ENCODE measurements at regions of chr5 and their contacts with region 1.

Region 1: GRCh38 chr5:174724491-174725260 is at the start of gene MSX2:
- DNase-seq: peak; percentile 92
- H3K4me3 ChIP-seq: peak within 1 kb of the TSS; percentile 50 to 60 (median 56)
- H3K27ac ChIP-seq: peak within 1 kb of the TSS; percentile 67 to 84 (median 74)
- H3K4me1 ChIP-seq: peaks cover 0 to 38% (median 31%) of the 10 kb centered on the region in 4 donors
- H3K27me3 ChIP-seq: peaks cover 28 to 91% (median 79%) of the 10 kb centered on the region in 3 donors
- CTCF ChIP-seq: no peak
- EP300 ChIP-seq: no peak
- POLR2A ChIP-seq: peak in 1 of 2 donors; percentile 22
- total RNA-seq, gene MSX2: 0.66 to 1.8 (median 1.1) TPM in 3 of 4 donors, not detected in the other

Region 2: GRCh38 chr5:174571662-174572397 is 152.8 kb before region 1 on chr5:
- intact Hi-C with region 1: loop called (anchors 10 kb)
- DNase-seq: peak; percentile 81
- H3K4me3 ChIP-seq: no peak overlapping the region
- H3K27ac ChIP-seq: peak overlapping the region in 3 of 4 donors; percentile 48 to 51 (median 50)
- H3K4me1 ChIP-seq: peaks cover 0 to 14% (median 10%) of the 10 kb centered on the region in 4 donors
- H3K27me3 ChIP-seq: no peaks in the 10 kb centered on the region
- CTCF ChIP-seq: peak in 2 of 4 experiments; percentile 8 to 29
- EP300 ChIP-seq: no peak
- POLR2A ChIP-seq: no peak

Region 3: DNA sequence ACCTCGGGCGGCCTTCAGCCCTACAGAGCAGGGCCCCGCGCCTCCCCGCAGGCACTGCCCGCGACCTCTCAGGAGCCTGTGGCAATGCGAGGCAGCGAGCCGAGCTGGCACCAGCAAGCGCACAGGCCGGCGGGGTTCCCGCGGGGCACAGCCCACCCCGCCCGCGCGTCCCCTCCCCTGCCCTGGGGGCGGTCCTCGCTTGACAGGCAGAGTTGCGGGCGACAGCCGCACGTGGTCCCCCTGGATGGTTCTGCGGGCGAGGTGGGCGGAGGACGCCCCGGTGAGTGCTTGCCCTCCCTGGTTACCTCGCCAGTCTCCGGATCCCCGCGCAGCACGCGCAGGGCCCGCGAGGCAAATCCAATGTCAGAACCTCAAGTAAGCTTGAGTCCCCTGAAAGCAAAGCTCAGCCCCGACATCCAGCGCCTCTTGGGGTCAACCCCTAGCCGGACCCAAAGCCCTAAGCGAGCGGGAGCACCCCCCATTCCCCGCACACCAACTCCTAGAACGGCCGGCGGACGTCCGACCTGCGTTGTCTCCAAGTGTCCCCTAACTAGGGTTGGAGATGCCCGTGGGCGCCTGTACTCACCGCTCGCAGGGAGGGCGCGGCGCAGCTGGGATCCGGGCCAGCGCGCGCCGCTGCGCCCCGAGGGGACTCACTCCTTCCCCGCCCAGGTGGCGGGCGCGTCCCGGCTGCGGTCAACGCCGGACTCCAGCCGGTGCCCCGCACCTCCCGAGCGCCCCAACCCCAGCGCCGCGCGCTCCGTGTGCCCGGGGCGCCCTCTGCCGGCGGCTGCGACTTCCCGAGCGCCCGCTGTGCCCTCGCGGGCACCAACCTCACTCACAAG is 719.6 kb after region 1 on chr5 and contains the start of gene DRD1:
- intact Hi-C with region 1: no loop called
- DNase-seq: no peak
- H3K4me3 ChIP-seq: peak within 1 kb of the TSS in 3 of 4 donors; percentile 29 to 41 (median 31)
- H3K27ac ChIP-seq: no peak within 1 kb of the TSS
- H3K4me1 ChIP-seq: peaks cover 0 to 23% (median 14%) of the 10 kb centered on the region in 4 donors
- H3K27me3 ChIP-seq: peaks cover 23 to 63% (median 30%) of the 10 kb centered on the region in 3 donors
- CTCF ChIP-seq: peak in 1 of 4 experiments; percentile 61
- EP300 ChIP-seq: no peak
- POLR2A ChIP-seq: no peak
- total RNA-seq, gene DRD1: not detected